ENCODE measurements at regions of chr3 and their contacts with region 1.

Region 1: DNA sequence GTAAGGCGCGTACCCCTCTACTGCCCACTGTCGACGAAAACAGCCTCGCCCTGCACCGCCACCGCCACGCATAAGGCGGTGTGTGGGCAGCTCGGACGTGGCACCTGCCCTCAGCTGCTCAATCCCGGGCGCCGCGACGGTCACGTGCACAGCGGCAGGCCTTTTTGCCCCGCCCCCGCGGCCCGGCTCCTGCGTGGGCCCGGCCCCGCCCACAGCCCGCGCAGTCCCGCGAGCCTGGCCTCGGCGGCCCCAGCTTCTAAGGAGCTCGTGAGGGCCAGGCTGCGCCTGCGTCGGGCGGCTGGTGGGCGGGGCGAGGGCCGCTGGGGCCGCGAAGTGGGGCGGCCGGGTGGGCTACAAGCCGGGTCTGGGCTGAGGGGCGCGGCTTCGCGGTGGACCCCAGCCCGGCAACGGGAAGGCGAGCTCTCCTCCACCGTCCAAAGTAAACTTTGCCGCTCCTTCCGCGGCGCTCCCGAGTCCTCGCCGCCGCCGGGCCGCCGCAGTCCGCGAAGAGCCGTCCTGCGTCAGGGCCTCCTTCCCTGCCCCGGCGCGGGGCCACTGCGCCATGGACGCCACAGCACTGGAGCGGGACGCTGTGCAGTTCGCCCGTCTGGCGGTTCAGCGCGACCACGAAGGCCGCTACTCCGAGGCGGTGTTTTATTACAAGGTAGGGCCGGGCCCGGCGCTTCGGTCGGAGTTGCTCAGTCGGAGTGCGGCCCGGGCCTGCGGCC is at the start of gene CAPN7:
- DNase-seq: peak; percentile 84 to 99 (median 94)
- ATAC-seq: peak; percentile 89
- H3K4me3 ChIP-seq: peak within 1 kb of the TSS; percentile 84
- H3K4me3 Mint-ChIP-seq: peak within 1 kb of the TSS; percentile 92
- H3K27ac ChIP-seq: peak within 1 kb of the TSS; percentile 69 to 86
- H3K27ac Mint-ChIP-seq: peak within 1 kb of the TSS; percentile 93
- H3K4me1 ChIP-seq: peaks cover 21% of the 10 kb centered on the region
- H3K4me1 Mint-ChIP-seq: peaks cover 43% of the 10 kb centered on the region
- H3K27me3 ChIP-seq: no peaks in the 10 kb centered on the region
- H3K27me3 Mint-ChIP-seq: no peaks in the 10 kb centered on the region
- CTCF ChIP-seq: no peak
- total RNA-seq, gene CAPN7: 64.7 to 69.4 TPM

Region 2: GRCh38 chr3:15064835-15065549 is 141.1 kb before region 1 on chr3 and contains the start of gene MRPS25:
- CTCF ChIA-PET with region 1: no interaction called
- POLR2A ChIA-PET with region 1: interaction called, 15 read pairs
- intact Hi-C with region 1: no loop called
- DNase-seq: peak; percentile 79 to 95 (median 85)
- ATAC-seq: peak; percentile 98
- H3K4me3 ChIP-seq: peak within 1 kb of the TSS; percentile 88
- H3K4me3 Mint-ChIP-seq: peak within 1 kb of the TSS; percentile 98
- H3K27ac ChIP-seq: peak within 1 kb of the TSS; percentile 61 to 77
- H3K27ac Mint-ChIP-seq: peak within 1 kb of the TSS; percentile 92
- H3K4me1 ChIP-seq: peaks cover 32% of the 10 kb centered on the region
- H3K4me1 Mint-ChIP-seq: peaks cover 25% of the 10 kb centered on the region
- H3K27me3 ChIP-seq: no peaks in the 10 kb centered on the region
- H3K27me3 Mint-ChIP-seq: no peaks in the 10 kb centered on the region
- CTCF ChIP-seq: no peak
- total RNA-seq, gene MRPS25: 59.9 to 60.2 TPM

Region 3: GRCh38 chr3:15221574-15222217 is 15.6 kb after region 1 on chr3:
- CTCF ChIA-PET with region 1: interaction called, 9 read pairs
- POLR2A ChIA-PET with region 1: interaction called, 13 read pairs
- intact Hi-C with region 1: no loop called
- DNase-seq: no peak
- ATAC-seq: no peak
- H3K4me3 ChIP-seq: no peak overlapping the region
- H3K4me3 Mint-ChIP-seq: no peak overlapping the region
- H3K27ac ChIP-seq: no peak overlapping the region
- H3K27ac Mint-ChIP-seq: no peak overlapping the region
- H3K4me1 ChIP-seq: peaks cover 4% of the 10 kb centered on the region
- H3K4me1 Mint-ChIP-seq: peaks cover 8% of the 10 kb centered on the region
- H3K27me3 ChIP-seq: no peaks in the 10 kb centered on the region
- H3K27me3 Mint-ChIP-seq: no peaks in the 10 kb centered on the region
- CTCF ChIP-seq: no peak

Region 4: GRCh38 chr3:15377961-15378791 is 172.1 kb after region 1 on chr3:
- CTCF ChIA-PET with region 1: interaction called, 6 read pairs
- POLR2A ChIA-PET with region 1: interaction called, 3 read pairs
- intact Hi-C with region 1: loop called in 1 of 2 experiments (anchors 1 kb)
- DNase-seq: peak; percentile 87 to 98 (median 92)
- ATAC-seq: peak; percentile 95
- H3K4me3 ChIP-seq: no peak overlapping the region
- H3K4me3 Mint-ChIP-seq: peak overlapping the region; percentile 2
- H3K27ac ChIP-seq: peak overlapping the region; percentile 79 to 94
- H3K27ac Mint-ChIP-seq: peak overlapping the region; percentile 91
- H3K4me1 ChIP-seq: peaks cover 8% of the 10 kb centered on the region
- H3K4me1 Mint-ChIP-seq: peaks cover 10% of the 10 kb centered on the region
- H3K27me3 ChIP-seq: no peaks in the 10 kb centered on the region
- H3K27me3 Mint-ChIP-seq: no peaks in the 10 kb centered on the region
- CTCF ChIP-seq: peak; percentile 82

Region 5: DNA sequence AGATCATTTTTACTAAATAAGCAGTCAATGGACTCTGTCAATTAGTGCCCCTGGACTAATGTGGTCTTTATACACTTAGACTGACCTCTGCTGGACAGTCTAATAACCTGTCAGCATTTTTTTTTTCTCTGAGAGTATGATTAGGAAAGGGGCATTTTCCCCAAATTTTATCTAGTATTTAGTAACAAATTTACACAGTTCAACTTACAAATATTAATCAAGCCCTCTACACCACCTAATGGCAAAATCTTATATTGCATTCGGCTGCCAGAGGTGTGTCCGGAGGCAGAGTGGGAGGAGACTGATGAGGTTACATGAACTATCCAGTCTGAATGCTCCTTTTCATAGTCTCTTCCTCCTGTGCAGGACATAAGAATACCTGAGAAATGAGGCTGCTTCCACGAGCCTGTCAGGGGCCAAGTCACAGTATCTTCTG is 351.4 kb after region 1 on chr3:
- CTCF ChIA-PET with region 1: interaction called, 5 read pairs
- POLR2A ChIA-PET with region 1: no interaction called
- intact Hi-C with region 1: loop called (anchors 2 kb)
- DNase-seq: peak; percentile 17 to 90 (median 38)
- ATAC-seq: peak; percentile 99
- H3K4me3 ChIP-seq: no peak overlapping the region
- H3K4me3 Mint-ChIP-seq: no peak overlapping the region
- H3K27ac ChIP-seq: no peak overlapping the region
- H3K27ac Mint-ChIP-seq: no peak overlapping the region
- H3K4me1 ChIP-seq: peaks cover 10% of the 10 kb centered on the region
- H3K4me1 Mint-ChIP-seq: peaks cover 13% of the 10 kb centered on the region
- H3K27me3 ChIP-seq: no peaks in the 10 kb centered on the region
- H3K27me3 Mint-ChIP-seq: no peaks in the 10 kb centered on the region
- CTCF ChIP-seq: peak; percentile 77

Region 6: GRCh38 chr3:16247276-16248061 is 1041.4 kb after region 1 on chr3:
- CTCF ChIA-PET with region 1: interaction called, 4 read pairs
- POLR2A ChIA-PET with region 1: no interaction called
- intact Hi-C with region 1: loop called in 1 of 2 experiments (anchors 5 kb)
- DNase-seq: peak; percentile 58 to 89 (median 70)
- ATAC-seq: peak; percentile 94
- H3K4me3 ChIP-seq: no peak overlapping the region
- H3K4me3 Mint-ChIP-seq: no peak overlapping the region
- H3K27ac ChIP-seq: no peak overlapping the region
- H3K27ac Mint-ChIP-seq: no peak overlapping the region
- H3K4me1 ChIP-seq: peaks cover 9% of the 10 kb centered on the region
- H3K4me1 Mint-ChIP-seq: peaks cover 9% of the 10 kb centered on the region
- H3K27me3 ChIP-seq: no peaks in the 10 kb centered on the region
- H3K27me3 Mint-ChIP-seq: no peaks in the 10 kb centered on the region
- CTCF ChIP-seq: peak; percentile 91

Measured in CD4-positive, alpha-beta T cell (primary cell).